Activated CD8-positive, alpha-beta T cell treated with anti-CD3 and anti-CD28 coated beads, Interleukin-2, amount 10 ng/mL, durations not matched to agents 7 days and 5 days (primary cell): ENCODE measurements at regions of chr18 and their contacts with region 1.

Region 1: GRCh38 chr18:45690975-45691815 is 32.8 kb upstream of the SLC14A1 start:
- DNase-seq: peak; percentile 85
- ATAC-seq: no peak
- H3K4me3 Mint-ChIP-seq: no peak overlapping the region
- H3K27ac Mint-ChIP-seq: no peak overlapping the region
- H3K4me1 Mint-ChIP-seq: peaks cover 49% of the 10 kb centered on the region
- H3K27me3 Mint-ChIP-seq: peaks cover 13% of the 10 kb centered on the region

Region 2: GRCh38 chr18:45608400-45608799 is 82.8 kb before region 1 on chr18:
- CTCF ChIA-PET with region 1: no interaction called
- POLR2A ChIA-PET with region 1: no interaction called
- DNase-seq: no peak
- ATAC-seq: no peak
- H3K4me3 Mint-ChIP-seq: no peak overlapping the region
- H3K27ac Mint-ChIP-seq: no peak overlapping the region
- H3K4me1 Mint-ChIP-seq: no peaks in the 10 kb centered on the region
- H3K27me3 Mint-ChIP-seq: peaks cover 37% of the 10 kb centered on the region

Region 3: GRCh38 chr18:45670281-45670962 is 20.8 kb before region 1 on chr18:
- CTCF ChIA-PET with region 1: interaction called, 315 read pairs
- POLR2A ChIA-PET with region 1: interaction called, 96 read pairs
- DNase-seq: peak; percentile 68
- ATAC-seq: peak; percentile 63
- H3K4me3 Mint-ChIP-seq: peak overlapping the region; percentile 43
- H3K27ac Mint-ChIP-seq: peak overlapping the region; percentile 90
- H3K4me1 Mint-ChIP-seq: peaks cover 65% of the 10 kb centered on the region
- H3K27me3 Mint-ChIP-seq: no peaks in the 10 kb centered on the region

Region 4: DNA sequence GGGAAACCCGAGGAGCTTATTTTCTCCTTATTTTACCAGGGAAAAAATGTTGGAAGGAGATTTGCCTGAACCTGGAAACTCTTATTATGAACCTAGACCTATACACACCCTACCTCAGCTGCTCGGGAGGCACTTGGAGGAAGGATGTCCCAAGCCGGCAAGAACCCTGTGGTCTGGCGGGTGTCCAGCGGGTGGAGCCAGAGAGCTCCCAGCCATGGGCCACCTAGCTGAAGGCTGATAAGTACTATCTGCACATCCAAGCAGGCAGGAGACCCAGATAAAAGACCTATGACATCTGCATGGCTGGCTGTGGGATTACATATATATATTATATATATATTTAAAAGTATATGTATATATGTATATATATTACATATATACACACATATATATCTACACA is 31.7 kb after region 1 on chr18:
- CTCF ChIA-PET with region 1: interaction called, 10 read pairs
- POLR2A ChIA-PET with region 1: no interaction called
- DNase-seq: peak; percentile 81
- ATAC-seq: peak; percentile 90
- H3K4me3 Mint-ChIP-seq: no peak overlapping the region
- H3K27ac Mint-ChIP-seq: no peak overlapping the region
- H3K4me1 Mint-ChIP-seq: peaks cover 6% of the 10 kb centered on the region
- H3K27me3 Mint-ChIP-seq: peaks cover 6% of the 10 kb centered on the region

Region 5: DNA sequence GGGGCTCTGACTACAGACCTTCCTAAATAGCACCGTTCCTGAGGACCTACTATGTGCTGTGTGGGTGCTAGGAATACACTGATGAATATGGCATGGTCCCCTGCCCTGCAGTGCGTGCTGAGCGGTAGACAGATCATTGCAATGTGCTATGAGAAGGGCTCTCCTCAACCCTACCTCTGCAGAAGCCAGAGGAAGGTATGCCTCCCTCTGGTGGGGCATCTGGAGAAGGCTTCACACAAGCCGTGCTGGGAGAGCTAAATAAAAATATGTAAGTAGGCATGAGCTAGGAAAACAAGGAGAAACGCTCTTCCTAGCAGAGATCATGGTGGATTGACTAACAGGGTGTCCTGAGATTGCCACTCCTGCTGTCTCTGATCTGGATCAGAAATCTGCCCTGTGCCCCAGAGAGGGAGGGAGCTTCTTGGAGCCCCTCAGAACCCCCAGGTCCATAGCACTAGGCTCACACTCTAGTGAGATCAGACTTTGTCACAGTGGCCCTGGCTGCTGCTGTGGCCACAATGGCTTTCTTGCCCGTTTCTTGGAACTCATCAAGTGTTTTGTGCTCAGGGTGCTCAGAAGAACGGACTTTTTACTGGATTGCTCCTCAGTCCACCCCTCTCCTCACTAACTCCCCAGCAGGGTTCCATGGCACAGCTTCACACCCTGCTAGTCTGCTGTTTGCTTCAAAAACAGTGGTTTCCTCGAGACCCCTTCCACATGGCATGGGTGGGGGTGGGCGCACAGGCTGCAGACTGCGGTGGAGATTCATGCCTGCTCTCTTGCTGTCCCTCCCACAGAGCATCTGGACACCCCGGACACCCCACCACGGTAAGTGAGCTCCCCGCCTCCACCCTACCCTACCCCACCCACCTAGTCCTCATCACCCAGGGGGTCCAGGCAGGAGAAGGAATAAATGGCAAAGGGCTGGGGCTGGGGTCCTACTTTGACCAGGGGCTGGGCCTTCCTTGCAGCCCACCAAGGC is 148.5 kb after region 1 on chr18:
- CTCF ChIA-PET with region 1: interaction called, 19 read pairs
- POLR2A ChIA-PET with region 1: no interaction called
- DNase-seq: peak; percentile 58
- ATAC-seq: peak; percentile 43
- H3K4me3 Mint-ChIP-seq: no peak overlapping the region
- H3K27ac Mint-ChIP-seq: no peak overlapping the region
- H3K4me1 Mint-ChIP-seq: peaks cover 10% of the 10 kb centered on the region
- H3K27me3 Mint-ChIP-seq: peaks cover 41% of the 10 kb centered on the region

Region 6: DNA sequence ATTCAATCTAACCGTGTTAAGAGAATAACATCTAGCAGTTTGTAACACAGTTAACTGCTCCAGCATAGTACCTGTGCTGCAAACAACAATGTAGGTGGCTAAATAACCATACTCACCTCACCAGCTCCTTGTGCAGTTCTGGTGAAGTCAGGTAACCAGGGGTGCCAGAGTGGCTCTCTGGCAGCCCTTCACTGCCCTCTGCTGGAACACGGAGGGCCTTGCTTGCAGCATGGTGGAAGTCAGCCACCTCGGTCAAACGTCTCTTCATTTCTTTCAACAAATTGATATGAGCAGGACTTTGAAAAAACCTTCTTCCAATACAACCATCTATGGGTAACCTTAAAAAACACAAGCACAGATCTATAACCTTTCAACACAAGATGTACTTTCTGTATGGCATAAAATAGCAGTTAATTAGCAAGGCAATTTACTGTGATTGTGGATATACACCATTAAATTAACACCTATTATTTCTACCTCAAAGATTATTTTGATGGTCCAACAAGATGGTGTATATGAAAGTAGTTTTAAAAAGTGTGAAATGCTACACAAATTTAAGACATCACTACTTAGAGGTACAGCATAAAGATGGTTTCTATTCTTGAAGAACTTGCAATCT is 219.3 kb after region 1 on chr18:
- CTCF ChIA-PET with region 1: interaction called, 19 read pairs
- POLR2A ChIA-PET with region 1: no interaction called
- DNase-seq: peak; percentile 76
- ATAC-seq: peak; percentile 87
- H3K4me3 Mint-ChIP-seq: no peak overlapping the region
- H3K27ac Mint-ChIP-seq: no peak overlapping the region
- H3K4me1 Mint-ChIP-seq: no peaks in the 10 kb centered on the region
- H3K27me3 Mint-ChIP-seq: no peaks in the 10 kb centered on the region